ENCODE measurements at regions of chr20 and their contacts with region 1.

Region 1: DNA sequence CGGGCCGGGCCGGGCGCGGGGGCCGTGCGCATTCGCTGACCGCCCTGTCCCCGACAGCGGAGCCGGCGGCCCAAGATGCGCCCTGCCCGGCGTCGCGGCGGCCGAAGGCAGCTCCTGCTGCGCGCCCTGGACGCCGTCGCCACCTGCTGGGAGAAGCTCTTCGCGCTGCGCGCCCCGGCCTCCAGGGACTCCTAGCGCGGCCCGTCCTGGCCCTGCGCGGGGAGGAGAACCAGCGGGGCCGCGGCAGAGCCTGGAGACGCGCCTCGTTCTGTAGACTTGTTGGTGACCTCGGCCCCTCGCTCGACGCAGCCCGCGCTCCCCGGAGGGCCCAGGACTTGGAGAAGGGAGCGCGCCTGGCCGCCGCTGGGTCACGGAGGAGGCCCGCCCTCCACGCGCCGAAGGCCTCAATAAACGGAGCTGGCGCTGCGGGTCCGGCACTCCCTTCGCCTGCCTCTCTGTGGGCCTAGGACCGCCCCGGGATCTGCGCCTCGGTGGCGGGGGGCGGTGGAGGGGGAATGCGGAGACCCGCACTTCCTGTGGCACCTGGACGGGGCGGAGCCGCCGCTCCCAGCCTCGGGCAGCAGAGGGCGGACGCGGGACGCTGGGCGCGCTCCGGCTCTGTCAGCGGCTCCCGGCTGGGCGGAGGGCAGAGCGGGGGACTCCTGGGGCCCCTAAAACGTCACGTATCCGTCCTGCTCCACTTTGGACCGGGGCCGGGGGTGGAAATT is 2.7 kb downstream of the C20orf204 start:
- DNase-seq: peak; percentile 84
- ATAC-seq: peak; percentile 76
- H3K4me3 Mint-ChIP-seq: peak overlapping the region; percentile 76
- H3K27ac Mint-ChIP-seq: peak overlapping the region; percentile 78
- H3K4me1 Mint-ChIP-seq: peaks cover 76% of the 10 kb centered on the region
- H3K27me3 Mint-ChIP-seq: no peaks in the 10 kb centered on the region

Region 2: GRCh38 chr20:63955827-63956663 is 82.7 kb before region 1 on chr20 and contains the start of gene UCKL1:
- CTCF ChIA-PET with region 1: interaction called, 13 read pairs
- POLR2A ChIA-PET with region 1: interaction called, 4 read pairs
- DNase-seq: peak; percentile 92
- ATAC-seq: peak; percentile 80
- H3K4me3 Mint-ChIP-seq: peak within 1 kb of the TSS; percentile 83
- H3K27ac Mint-ChIP-seq: peak within 1 kb of the TSS; percentile 87
- H3K4me1 Mint-ChIP-seq: peaks cover 39% of the 10 kb centered on the region
- H3K27me3 Mint-ChIP-seq: no peaks in the 10 kb centered on the region
- total RNA-seq, gene UCKL1: 41.1 to 45.4 TPM

Region 3: GRCh38 chr20:63980806-63981728 is 57.7 kb before region 1 on chr20 and contains the start of gene PRPF6:
- CTCF ChIA-PET with region 1: interaction called, 197 read pairs
- POLR2A ChIA-PET with region 1: interaction called, 77 read pairs
- DNase-seq: peak; percentile 98
- ATAC-seq: peak; percentile 70
- H3K4me3 Mint-ChIP-seq: peak within 1 kb of the TSS; percentile 87
- H3K27ac Mint-ChIP-seq: peak within 1 kb of the TSS; percentile 95
- H3K4me1 Mint-ChIP-seq: peaks cover 61% of the 10 kb centered on the region
- H3K27me3 Mint-ChIP-seq: no peaks in the 10 kb centered on the region
- total RNA-seq, gene PRPF6: 64.7 to 68.3 TPM

Region 4: DNA sequence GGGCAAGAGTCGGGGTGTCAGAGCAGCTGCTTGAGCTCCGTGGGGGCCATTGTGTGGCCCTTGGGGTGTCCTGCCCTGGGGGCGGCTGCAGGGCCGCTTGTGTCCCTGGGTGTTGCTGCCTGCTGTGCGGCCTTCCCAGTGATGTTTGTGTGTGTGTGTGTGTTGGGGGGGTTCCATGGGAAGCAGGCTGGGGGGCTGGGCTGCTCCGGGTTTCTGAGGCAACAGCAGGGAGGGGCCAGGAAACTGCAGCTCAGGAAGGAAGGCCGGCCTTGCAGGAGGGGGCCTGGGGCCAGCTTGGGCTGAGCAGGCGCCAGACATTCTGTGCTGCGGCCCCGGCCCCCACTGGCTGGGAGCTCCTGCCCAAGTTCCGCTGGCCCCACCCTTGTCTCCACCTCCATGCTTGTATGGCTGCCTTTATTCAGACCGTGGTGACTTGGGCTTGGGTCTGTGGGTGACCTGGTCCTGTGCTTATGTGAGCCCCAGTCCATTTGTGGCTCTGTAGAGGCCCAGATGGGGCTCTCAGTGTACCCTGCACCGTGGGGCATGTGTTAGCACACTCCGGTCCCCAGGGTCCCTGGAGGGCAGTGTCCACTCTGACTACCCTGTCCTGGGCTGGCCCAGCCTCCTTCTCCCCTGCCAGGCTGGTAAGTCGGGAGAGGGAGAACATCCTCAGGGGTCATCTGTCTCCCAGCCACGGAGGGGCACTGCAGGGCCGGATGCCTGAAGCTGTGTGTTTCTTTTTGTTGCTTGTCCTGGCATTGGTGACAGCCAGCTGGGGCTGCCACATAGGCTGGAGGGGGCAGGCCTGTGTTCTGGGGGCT is 15.3 kb after region 1 on chr20:
- CTCF ChIA-PET with region 1: interaction called, 51 read pairs
- POLR2A ChIA-PET with region 1: interaction called, 6 read pairs
- DNase-seq: no peak
- ATAC-seq: no peak
- H3K4me3 Mint-ChIP-seq: no peak overlapping the region
- H3K27ac Mint-ChIP-seq: peak overlapping the region; percentile 43
- H3K4me1 Mint-ChIP-seq: peaks cover 38% of the 10 kb centered on the region
- H3K27me3 Mint-ChIP-seq: peaks cover 20% of the 10 kb centered on the region

Region 5: DNA sequence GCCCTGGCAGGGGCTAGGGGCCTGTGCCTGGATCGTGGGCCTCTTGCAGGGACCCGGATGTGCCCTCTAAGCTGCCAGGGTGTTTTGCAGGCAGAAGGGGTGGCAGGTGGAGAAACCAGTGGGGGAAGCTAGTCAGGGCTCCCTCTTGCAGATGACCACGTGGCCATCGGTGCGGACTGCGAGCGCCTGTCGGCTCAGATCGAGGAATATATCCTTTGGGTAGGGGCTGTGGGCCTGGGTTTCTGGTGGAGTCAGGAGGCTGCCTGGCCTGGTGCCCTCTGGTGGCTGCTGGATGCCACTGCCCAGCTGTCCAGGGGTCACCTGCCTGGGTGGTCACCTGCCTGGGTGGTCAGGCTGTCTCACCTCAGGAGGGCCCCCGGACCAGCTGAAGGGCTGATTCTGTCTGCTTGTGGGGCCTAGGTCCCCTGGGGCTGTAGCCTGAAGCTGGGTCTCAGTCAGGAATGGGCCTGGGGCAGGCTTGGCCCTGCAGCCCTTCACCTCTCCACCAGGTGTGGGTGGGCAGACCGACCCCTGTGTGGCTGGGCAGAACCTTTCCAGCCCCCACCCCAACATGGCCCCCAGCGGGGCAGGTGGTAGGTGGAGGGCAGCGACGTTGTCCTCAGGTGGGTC is 31.0 kb after region 1 on chr20:
- CTCF ChIA-PET with region 1: interaction called, 10 read pairs
- POLR2A ChIA-PET with region 1: no interaction called
- DNase-seq: no peak
- ATAC-seq: no peak
- H3K4me3 Mint-ChIP-seq: no peak overlapping the region
- H3K27ac Mint-ChIP-seq: no peak overlapping the region
- H3K4me1 Mint-ChIP-seq: peaks cover 68% of the 10 kb centered on the region
- H3K27me3 Mint-ChIP-seq: no peaks in the 10 kb centered on the region

Region 6: DNA sequence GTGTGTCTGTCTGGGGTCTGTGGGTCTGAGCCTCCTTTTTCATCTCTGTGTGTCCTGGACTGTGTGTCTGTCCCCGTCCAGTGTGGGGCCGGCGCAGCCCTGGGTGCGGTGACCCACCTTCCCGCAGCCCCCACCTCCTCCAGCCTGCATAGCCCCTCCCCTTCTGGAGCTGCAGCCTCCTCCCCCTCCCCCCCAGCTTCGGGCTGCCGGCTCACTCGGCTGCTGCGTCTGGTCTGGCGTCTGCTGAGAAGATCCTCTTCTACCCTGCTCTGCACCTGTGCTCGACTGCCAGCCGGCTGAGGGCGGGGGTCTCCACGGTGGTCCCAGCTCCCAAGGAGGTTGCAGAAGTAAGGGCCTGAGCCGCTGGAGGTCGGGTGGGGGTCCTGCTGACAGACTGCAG is 53.0 kb after region 1 on chr20:
- CTCF ChIA-PET with region 1: no interaction called
- POLR2A ChIA-PET with region 1: no interaction called
- DNase-seq: no peak
- ATAC-seq: no peak
- H3K4me3 Mint-ChIP-seq: no peak overlapping the region
- H3K27ac Mint-ChIP-seq: no peak overlapping the region
- H3K4me1 Mint-ChIP-seq: no peaks in the 10 kb centered on the region
- H3K27me3 Mint-ChIP-seq: peaks cover 8% of the 10 kb centered on the region

Region 7: DNA sequence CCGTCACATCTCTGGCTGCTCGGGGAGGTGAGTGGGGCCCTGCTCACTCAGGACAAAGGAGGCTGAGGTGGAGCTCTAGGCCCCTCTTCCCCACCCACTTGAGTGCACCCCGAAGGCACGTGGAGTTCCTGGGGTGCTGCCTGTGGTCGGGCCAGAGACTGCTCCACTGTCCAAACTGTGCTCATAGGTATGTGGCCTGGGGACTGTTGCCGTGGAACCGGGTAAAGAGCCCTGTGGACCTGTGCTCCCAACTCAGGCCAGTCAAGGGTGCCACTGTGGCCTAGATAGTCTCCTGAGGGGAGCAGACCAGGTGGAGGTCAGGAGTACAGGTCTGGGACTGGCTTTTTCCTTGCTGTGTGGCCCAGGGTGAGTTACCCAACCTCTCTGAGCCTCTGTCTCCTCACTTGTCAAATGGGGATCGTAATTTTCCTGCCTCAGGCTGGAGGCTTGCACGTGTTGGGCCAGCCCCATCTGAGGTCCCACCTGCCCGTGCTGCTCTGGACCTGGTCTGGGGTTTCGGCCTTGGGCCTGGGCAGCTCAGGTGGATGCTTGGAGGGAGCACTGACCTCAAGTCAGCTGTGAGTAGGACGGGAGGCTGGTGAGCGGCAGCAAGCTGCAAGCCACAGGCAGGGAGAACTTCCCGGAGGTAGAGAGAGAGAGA is 81.1 kb after region 1 on chr20:
- CTCF ChIA-PET with region 1: interaction called, 35 read pairs
- POLR2A ChIA-PET with region 1: interaction called, 3 read pairs
- DNase-seq: no peak
- ATAC-seq: peak; percentile 39
- H3K4me3 Mint-ChIP-seq: peak overlapping the region; percentile 63
- H3K27ac Mint-ChIP-seq: peak overlapping the region; percentile 87
- H3K4me1 Mint-ChIP-seq: peaks cover 10% of the 10 kb centered on the region
- H3K27me3 Mint-ChIP-seq: peaks cover 14% of the 10 kb centered on the region

Region 8: GRCh38 chr20:64150756-64151633 is 112.3 kb after region 1 on chr20:
- CTCF ChIA-PET with region 1: no interaction called
- POLR2A ChIA-PET with region 1: no interaction called
- DNase-seq: no peak
- ATAC-seq: no peak
- H3K4me3 Mint-ChIP-seq: no peak overlapping the region
- H3K27ac Mint-ChIP-seq: peak overlapping the region; percentile 27
- H3K4me1 Mint-ChIP-seq: no peaks in the 10 kb centered on the region
- H3K27me3 Mint-ChIP-seq: no peaks in the 10 kb centered on the region

Region 9: DNA sequence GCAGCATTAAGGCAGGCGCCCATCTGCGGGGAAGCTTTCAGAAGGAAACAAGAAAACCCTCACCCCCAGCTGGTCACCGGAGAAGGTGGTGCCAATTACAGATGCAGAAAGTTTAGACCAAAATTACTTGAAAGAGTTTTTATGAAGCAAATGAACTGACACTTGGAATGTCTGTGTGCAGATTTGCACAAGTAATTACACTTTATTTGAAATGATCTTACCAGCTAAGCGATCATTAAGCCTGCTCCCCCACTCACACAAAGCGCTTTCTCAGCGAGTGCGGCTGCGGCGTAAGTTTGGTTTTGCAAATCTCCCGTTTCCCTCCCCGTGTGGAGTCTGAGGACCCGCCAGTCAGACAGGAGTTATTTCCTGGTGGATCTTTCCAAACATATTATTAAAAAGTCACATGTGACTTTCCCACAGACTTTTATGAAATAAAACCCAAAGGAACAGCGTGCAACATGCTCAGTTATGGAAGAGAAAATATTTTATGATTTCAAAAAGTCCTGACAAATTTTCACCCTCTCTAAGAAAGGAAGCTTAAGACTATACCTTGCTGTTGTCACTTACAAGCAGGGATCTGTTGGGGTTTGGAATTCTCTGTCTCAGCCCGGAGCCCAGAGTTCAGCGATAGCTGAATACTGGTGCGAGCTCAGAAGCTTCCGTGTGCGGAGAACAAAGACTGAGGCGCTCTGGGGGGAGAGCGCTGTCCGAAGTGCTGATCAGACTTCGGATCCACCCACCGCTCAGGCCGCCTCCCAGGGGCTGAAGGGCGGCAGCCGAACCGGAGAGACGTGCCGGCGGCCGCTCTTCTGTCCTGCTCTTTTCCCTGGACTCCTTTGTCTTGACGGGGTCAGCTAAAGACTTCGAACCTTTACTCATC is 122.9 kb after region 1 on chr20:
- CTCF ChIA-PET with region 1: no interaction called
- POLR2A ChIA-PET with region 1: no interaction called
- DNase-seq: peak; percentile 58
- ATAC-seq: peak; percentile 76
- H3K4me3 Mint-ChIP-seq: no peak overlapping the region
- H3K27ac Mint-ChIP-seq: no peak overlapping the region
- H3K4me1 Mint-ChIP-seq: no peaks in the 10 kb centered on the region
- H3K27me3 Mint-ChIP-seq: peaks cover 20% of the 10 kb centered on the region

Region 10: DNA sequence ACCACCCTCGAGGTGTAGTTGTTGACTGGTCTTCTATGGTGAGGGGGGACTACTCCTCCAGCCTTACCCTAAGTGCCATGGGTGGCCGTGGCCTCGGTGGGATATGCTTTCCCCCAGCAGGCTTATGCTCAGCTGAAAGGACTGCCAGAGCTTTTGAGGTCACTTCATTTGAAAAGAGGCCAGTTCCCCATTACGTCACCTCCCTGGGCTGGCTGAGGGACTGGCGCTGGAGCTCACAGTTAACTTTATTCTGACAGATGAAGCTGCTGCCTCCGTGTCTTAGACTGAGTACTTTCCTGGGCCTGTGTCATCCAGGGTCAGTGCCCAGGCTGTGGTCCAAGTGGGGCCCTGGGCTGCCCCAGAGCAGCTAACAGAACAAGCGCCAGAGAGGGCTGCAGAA is 174.0 kb after region 1 on chr20:
- CTCF ChIA-PET with region 1: no interaction called
- POLR2A ChIA-PET with region 1: no interaction called
- DNase-seq: no peak
- ATAC-seq: no peak
- H3K4me3 Mint-ChIP-seq: no peak overlapping the region
- H3K27ac Mint-ChIP-seq: no peak overlapping the region
- H3K4me1 Mint-ChIP-seq: peaks cover 11% of the 10 kb centered on the region
- H3K27me3 Mint-ChIP-seq: no peaks in the 10 kb centered on the region